Posterior vena cava (tissue), 2 donors: ENCODE measurements at regions of chr20 and their contacts with region 1.

Region 1: GRCh38 chr20:5614506-5614905 is 135.7 kb upstream of the SHLD1 start:
- DNase-seq: no peak

Region 2: GRCh38 chr20:5630071-5630470 is 15.6 kb after region 1 on chr20:
- intact Hi-C with region 1: loop called in 1 of 2 experiments (anchors 2 kb)
- DNase-seq: no peak

Region 3: DNA sequence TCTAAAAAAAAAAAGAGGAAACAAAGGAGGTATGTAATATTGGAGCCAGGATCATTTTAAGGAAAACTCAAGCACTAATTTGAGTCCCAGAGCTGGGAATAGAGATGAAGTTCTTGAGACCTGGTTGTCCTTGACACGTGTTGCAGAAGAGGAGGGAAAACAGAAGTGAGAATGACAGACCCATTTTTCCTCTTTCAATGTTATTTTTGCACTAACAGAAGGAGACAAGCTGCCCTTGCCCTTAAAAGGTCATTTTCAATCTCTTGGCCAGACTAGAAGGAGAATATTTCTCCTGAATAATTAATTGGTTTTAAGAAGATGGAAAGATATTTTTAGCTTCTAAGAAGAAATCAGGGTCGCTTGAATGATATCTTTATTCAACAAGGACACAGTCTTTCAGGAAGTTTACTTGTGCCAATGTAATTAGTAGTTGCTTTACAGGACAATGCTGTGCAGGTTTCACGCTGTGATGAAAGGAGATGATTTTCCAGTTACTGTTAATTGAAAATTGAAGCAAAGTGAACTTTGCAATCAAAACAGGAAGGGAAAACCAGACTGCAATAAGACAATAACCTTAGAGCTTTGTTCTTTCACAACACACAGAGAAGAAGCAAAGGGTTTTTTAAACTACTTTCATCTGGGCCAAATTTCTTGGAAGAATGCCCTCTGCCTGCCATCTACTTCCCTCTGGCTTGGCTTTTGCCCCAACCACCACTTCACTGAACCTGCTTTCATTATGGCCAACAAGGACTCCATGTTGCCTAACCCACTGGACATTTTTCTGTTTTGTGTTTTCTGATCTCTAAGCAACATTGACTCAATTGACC is 27.9 kb after region 1 on chr20:
- intact Hi-C with region 1: no loop called
- DNase-seq: peak; percentile 66

Region 4: GRCh38 chr20:5667705-5668528 is 53.4 kb after region 1 on chr20:
- intact Hi-C with region 1: no loop called
- DNase-seq: peak; percentile 5

Region 5: DNA sequence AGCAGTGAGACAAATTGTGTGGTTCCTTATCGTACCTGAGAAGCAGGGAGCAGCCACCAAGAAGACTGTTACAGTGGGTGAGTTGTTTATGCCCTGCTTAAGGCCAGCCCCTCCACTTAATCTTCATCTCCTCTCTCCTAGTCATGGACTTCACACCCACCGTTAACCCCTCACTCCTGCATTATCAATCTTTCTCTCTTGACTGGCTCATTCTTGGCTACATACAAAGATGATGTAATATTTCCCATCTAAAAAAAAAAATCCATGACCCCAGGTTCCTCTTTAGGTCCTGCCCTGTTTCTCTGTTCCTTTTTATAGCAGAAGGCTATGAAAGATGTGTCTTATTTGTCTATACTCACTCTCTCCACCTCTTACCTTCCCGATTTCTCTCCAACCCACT is 208.1 kb after region 1 on chr20:
- intact Hi-C with region 1: no loop called
- DNase-seq: no peak